MCF 10A (cell line): ENCODE measurements at regions of chr7 and their contacts with region 1.

Region 1: DNA sequence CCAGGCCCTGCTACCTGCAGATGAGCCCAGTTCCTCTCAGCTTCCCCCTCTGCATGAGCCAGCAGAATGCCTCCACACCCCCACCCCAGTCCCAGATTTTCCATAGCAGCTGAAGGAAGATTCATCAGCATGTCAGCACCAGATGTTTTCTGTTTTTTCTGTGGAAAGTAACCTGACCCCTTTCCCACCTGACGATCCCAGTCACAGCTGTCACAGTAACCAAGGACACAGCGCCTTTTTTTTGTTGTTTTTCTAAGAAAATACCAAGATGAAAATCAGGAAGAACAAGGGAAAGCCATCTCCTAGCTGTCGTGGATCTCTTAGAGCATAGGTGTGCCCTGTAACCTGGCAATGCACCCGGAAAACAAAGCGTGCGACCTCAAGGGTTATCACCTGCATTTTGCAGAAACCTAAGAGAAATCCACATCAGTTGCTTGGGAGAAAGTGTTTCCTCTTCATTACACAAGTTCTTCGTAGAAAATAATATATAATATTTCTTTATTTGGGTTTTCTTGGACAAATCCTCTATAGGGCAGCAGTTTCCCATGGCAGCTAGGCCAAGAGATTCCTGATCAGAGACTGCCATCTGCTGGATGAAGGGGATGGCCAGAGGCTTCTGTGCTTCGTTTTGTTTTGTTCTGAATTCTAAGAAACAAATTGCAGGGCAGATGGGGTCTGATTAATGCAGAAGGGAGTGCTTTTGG is 401.9 kb downstream of the TNS3 start:
- DNase-seq: peak; percentile 76
- H3K4me3 Mint-ChIP-seq: no peak overlapping the region
- H3K27ac Mint-ChIP-seq: no peak overlapping the region
- H3K4me1 Mint-ChIP-seq: no peaks in the 10 kb centered on the region
- H3K27me3 Mint-ChIP-seq: peaks cover 20% of the 10 kb centered on the region
- CTCF ChIP-seq: peak; percentile 85

Region 2: DNA sequence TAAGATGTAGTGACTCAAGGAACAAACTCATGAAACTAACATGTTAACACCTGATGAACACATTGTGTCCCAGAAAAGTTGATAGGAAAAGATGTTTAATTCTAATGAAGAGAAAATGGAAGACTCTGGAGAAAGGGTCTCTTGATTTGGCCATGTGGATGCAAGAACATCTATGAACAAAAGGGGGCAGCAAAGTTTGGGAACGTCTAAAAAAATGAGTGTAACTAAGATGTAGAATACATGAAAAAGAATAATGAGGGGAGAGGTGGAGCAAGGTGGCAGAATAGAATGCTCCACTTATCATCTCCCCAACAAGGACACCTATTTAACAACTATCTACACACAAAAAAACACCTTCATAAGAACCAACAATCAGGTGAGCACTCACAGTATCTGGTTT is 403.2 kb before region 1 on chr7:
- CTCF ChIA-PET with region 1: no interaction called
- POLR2A ChIA-PET with region 1: no interaction called
- intact Hi-C with region 1: loop called (anchors 10 kb)
- DNase-seq: peak; percentile 47
- H3K4me3 Mint-ChIP-seq: no peak overlapping the region
- H3K27ac Mint-ChIP-seq: no peak overlapping the region
- H3K4me1 Mint-ChIP-seq: peaks cover 25% of the 10 kb centered on the region
- H3K27me3 Mint-ChIP-seq: no peaks in the 10 kb centered on the region
- CTCF ChIP-seq: peak; percentile 12